Activated T-helper 2 cell treated with anti-CD3 and anti-CD28 coated beads, Interferon-gamma antibody, Interleukin-2, Interleukin-4, amounts not matched to agents 10 μg/mL and 5 μg/mL and 100 μg/mL, durations not matched to agents 14 hours and 24 hours and 36 hours (primary cell): ENCODE measurements at regions of chr5 and their contacts with region 1.

Region 1: DNA sequence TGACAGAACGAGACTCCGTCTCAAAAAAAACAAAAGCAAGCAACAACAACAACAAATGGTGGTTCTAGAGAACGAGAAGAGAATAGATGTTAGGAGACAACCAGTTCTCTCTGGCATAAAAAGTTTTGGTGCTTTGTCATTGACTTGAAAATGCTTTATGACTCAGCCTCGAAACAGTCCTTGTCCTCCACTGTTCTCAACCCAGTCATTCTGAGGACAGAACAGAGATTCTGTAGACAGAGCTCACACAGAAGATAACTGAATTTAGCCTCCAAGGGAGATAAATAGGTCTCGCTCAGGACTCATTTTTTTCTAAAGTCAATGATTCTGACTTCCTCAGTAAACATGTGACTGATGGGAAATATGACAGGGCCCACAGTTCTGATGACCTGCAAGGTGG is 76.0 kb upstream of the FSTL4 start:
- DNase-seq: no peak
- H3K4me3 Mint-ChIP-seq: no peak overlapping the region
- H3K27ac Mint-ChIP-seq: peak overlapping the region; percentile 20
- H3K4me1 Mint-ChIP-seq: peaks cover 3% of the 10 kb centered on the region
- H3K27me3 Mint-ChIP-seq: peaks cover 9% of the 10 kb centered on the region

Region 2: GRCh38 chr5:133336121-133336968 is 352.0 kb before region 1 on chr5:
- intact Hi-C with region 1: no loop called
- DNase-seq: no peak
- H3K4me3 Mint-ChIP-seq: no peak overlapping the region
- H3K27ac Mint-ChIP-seq: no peak overlapping the region
- H3K4me1 Mint-ChIP-seq: peaks cover 4% of the 10 kb centered on the region
- H3K27me3 Mint-ChIP-seq: no peaks in the 10 kb centered on the region

Region 3: DNA sequence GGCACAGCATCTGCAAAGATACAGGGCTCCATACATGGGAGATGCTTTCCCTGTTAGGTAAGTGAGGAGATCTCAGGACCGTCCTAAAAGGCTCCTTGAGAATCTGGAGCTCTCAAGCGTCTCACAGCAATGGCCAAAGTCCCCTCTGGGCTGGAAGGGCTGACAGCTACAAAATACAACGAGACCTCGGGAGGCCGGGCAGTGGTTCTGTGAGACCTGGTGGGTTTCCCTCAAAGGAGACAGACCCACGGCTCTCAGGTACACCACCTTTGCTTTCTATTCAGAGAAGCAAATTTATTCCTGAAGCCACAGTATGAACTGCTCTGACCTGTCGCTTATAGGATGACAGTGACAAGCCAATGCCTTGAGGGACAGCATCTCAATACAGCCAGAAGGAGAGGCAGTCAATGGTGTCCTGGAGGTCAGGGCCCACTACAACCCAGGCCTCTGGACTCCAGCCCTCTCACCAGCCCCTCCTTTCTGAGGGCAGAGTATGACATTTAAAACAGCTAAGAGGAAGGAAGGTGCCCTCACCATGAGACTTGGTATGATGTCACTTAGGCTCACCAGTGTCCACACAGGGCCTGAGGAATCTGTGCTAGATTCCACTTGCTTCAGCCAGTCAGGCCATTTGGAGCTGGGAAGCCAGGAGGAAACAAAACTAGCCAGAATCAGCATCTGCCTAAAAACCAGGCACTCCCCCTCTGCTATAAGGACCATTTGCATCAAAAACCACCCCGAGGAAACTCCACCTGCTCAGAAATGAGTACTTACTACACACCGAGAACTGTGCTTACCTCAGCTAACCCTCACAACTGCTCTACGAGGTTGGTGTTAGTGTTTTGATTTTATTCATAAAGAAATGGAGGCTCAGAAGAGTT is 10.5 kb after region 1 on chr5:
- intact Hi-C with region 1: loop called (anchors 1 kb)
- DNase-seq: no peak
- H3K4me3 Mint-ChIP-seq: no peak overlapping the region
- H3K27ac Mint-ChIP-seq: peak overlapping the region; percentile 8
- H3K4me1 Mint-ChIP-seq: peaks cover 15% of the 10 kb centered on the region
- H3K27me3 Mint-ChIP-seq: no peaks in the 10 kb centered on the region

Region 4: DNA sequence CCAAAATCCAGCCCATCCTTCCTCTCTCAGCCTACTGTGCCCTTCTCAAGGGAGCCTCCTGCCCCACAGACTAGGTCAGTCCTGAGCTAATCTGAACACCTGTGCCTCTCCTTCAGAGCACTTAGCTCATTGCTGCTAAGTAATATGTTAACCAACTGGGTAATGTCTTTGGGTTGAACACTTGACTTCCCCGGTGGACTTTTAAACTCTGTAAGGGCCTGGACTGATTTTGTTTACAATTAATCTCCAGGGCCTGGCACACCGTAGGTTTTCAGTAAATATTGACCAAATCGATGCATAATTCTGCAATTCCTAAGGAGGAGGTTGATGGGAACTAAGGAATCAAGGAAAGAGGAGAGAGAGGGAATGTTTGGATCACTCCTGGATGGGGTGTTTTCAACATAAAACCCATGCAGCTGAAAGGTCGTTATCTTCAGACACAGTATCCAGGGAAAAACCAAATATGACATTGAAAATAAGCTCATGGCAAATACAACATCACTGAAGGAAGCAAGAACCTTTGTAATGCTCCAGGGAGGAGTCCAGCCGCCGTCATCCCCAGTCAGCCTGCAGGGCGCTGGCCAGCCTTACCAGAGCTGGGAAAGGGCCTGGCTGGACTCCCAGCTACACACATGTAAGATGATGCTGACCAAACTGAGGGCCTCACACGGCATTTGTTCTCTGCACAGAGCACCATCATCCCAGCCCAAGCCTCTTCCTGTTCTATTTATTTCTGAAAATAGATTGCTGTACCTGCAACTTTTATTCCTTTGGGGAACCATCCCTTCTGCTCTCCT is 113.8 kb after region 1 on chr5:
- intact Hi-C with region 1: no loop called
- DNase-seq: no peak
- H3K4me3 Mint-ChIP-seq: no peak overlapping the region
- H3K27ac Mint-ChIP-seq: no peak overlapping the region
- H3K4me1 Mint-ChIP-seq: no peaks in the 10 kb centered on the region
- H3K27me3 Mint-ChIP-seq: peaks cover 13% of the 10 kb centered on the region

Region 5: DNA sequence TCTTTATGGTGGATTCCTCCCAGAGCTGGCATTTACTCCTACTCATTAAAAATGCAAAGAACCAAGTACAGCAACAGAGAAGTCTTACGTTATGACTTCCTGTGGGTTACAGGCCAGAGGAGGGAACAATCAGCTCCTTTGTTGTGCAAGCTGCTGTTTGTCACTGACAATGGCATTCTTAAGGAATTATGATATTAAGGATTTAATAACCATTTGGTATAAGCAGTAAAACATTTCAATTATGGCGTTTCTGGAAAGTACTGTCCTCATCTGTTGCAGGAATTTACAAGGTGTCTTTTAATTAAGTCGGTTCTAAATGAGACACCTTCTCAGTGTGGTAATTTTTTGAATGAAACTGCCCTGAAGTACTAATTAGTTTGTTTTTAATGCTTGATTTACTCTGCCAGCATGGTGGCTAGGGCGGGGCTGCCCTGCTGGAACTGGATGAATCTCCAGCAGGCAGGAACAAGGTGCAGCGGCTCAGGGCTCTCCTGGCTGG is 365.5 kb after region 1 on chr5:
- intact Hi-C with region 1: no loop called
- DNase-seq: no peak
- H3K4me3 Mint-ChIP-seq: no peak overlapping the region
- H3K27ac Mint-ChIP-seq: no peak overlapping the region
- H3K4me1 Mint-ChIP-seq: peaks cover 12% of the 10 kb centered on the region
- H3K27me3 Mint-ChIP-seq: peaks cover 11% of the 10 kb centered on the region